Naive thymus-derived CD4-positive, alpha-beta T cell (primary cell): ENCODE measurements at regions of chr16 and their contacts with region 1.

Region 1: GRCh38 chr16:89686520-89687091 is at the start of gene CDK10:
- DNase-seq: peak; percentile 80 to 97 (median 89)
- ATAC-seq: peak; percentile 90
- H3K4me3 ChIP-seq: peak within 1 kb of the TSS; percentile 96
- H3K4me3 Mint-ChIP-seq: peak within 1 kb of the TSS; percentile 86 to 96 (median 92)
- H3K27ac ChIP-seq: peak within 1 kb of the TSS; percentile 93
- H3K27ac Mint-ChIP-seq: peak within 1 kb of the TSS; percentile 80 to 95 (median 92)
- H3K4me1 ChIP-seq: peaks cover 0 to 7% of the 10 kb centered on the region in 2 donors
- H3K4me1 Mint-ChIP-seq: peaks cover 9 to 18% (median 17%) of the 10 kb centered on the region in 7 donors
- H3K27me3 ChIP-seq: no peaks in the 10 kb centered on the region
- H3K27me3 Mint-ChIP-seq: no peaks in the 10 kb centered on the region
- total RNA-seq, gene CDK10: 91.5 to 150 (median 102) TPM

Region 2: DNA sequence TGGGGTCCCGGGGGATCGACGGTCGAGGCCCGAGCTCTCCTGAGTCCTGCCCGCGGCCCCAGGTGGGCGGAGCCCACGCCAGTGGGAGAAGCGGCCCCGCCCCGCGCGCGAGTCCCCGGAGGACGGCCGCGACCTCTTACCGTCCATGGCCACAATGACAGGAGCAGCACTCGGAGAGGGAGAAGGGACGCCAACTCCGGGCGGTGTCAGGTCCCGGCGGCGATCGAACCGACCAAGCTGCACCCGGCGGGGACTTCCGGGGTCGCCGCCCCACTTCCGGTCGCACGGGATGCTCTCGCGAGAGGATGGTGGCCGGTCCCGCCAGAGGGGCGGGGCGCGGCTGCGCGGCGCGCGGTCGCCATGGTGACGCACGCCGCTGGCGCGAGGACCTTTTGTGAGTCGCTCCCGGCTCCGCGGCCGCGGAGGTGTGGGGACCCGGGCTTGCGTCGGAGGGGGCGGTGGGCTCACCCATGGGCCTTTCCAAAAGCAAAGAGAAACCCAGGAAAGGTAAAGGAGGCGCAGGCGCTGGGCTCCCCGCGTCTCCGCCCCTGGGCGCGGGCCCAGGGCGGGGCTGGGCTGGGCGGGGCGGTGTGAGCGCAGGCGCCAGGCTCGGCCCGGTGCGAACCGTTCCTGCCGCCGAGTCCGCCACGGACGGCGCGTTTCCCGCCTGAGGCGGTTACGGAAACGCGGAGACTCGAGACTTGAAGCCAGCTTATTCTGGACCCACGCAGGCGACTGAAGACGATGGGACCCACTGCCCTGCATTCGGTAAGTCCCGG is 29.0 kb before region 1 on chr16 and contains the starts of genes CHMP1A and SPATA33:
- CTCF ChIA-PET with region 1: no interaction called
- POLR2A ChIA-PET with region 1: interaction called, 3 read pairs
- intact Hi-C with region 1: loop called (anchors 1 kb)
- DNase-seq: peak; percentile 87 to 98 (median 94)
- ATAC-seq: peak; percentile 95
- H3K4me3 ChIP-seq: peak within 1 kb of the TSS; percentile 88
- H3K4me3 Mint-ChIP-seq: peak within 1 kb of the TSS; percentile 82 to 93 (median 86)
- H3K27ac ChIP-seq: peak within 1 kb of the TSS; percentile 85
- H3K27ac Mint-ChIP-seq: peak within 1 kb of the TSS; percentile 71 to 89 (median 85)
- H3K4me1 ChIP-seq: peaks cover 6 to 16% of the 10 kb centered on the region in 2 donors
- H3K4me1 Mint-ChIP-seq: peaks cover 17 to 44% (median 36%) of the 10 kb centered on the region in 7 donors
- H3K27me3 ChIP-seq: no peaks in the 10 kb centered on the region
- H3K27me3 Mint-ChIP-seq: no peaks in the 10 kb centered on the region
- total RNA-seq, gene CHMP1A: 64.4 to 99.0 (median 65.9) TPM
- total RNA-seq, gene SPATA33: 6.4 to 17.0 (median 7.9) TPM

Region 3: GRCh38 chr16:89801800-89802199 is 115.2 kb after region 1 on chr16:
- CTCF ChIA-PET with region 1: no interaction called
- POLR2A ChIA-PET with region 1: no interaction called
- intact Hi-C with region 1: no loop called
- DNase-seq: no peak
- ATAC-seq: no peak
- H3K4me3 ChIP-seq: no peak overlapping the region
- H3K4me3 Mint-ChIP-seq: no peak overlapping the region
- H3K27ac ChIP-seq: no peak overlapping the region
- H3K27ac Mint-ChIP-seq: no peak overlapping the region
- H3K4me1 ChIP-seq: no peaks in the 10 kb centered on the region
- H3K4me1 Mint-ChIP-seq: no peaks in the 10 kb centered on the region
- H3K27me3 ChIP-seq: no peaks in the 10 kb centered on the region
- H3K27me3 Mint-ChIP-seq: no peaks in the 10 kb centered on the region

Region 4: GRCh38 chr16:89880477-89881367 is 194.1 kb after region 1 on chr16:
- CTCF ChIA-PET with region 1: no interaction called
- POLR2A ChIA-PET with region 1: no interaction called
- intact Hi-C with region 1: no loop called
- DNase-seq: no peak
- ATAC-seq: peak; percentile 26
- H3K4me3 ChIP-seq: no peak overlapping the region
- H3K4me3 Mint-ChIP-seq: no peak overlapping the region
- H3K27ac ChIP-seq: no peak overlapping the region
- H3K27ac Mint-ChIP-seq: peak overlapping the region in 1 of 9 donors; percentile 58
- H3K4me1 ChIP-seq: no peaks in the 10 kb centered on the region
- H3K4me1 Mint-ChIP-seq: peaks cover 2 to 27% (median 22%) of the 10 kb centered on the region in 7 donors
- H3K27me3 ChIP-seq: no peaks in the 10 kb centered on the region
- H3K27me3 Mint-ChIP-seq: no peaks in the 10 kb centered on the region